ENCODE measurements at regions of chr15 and their contacts with region 1.

Region 1: DNA sequence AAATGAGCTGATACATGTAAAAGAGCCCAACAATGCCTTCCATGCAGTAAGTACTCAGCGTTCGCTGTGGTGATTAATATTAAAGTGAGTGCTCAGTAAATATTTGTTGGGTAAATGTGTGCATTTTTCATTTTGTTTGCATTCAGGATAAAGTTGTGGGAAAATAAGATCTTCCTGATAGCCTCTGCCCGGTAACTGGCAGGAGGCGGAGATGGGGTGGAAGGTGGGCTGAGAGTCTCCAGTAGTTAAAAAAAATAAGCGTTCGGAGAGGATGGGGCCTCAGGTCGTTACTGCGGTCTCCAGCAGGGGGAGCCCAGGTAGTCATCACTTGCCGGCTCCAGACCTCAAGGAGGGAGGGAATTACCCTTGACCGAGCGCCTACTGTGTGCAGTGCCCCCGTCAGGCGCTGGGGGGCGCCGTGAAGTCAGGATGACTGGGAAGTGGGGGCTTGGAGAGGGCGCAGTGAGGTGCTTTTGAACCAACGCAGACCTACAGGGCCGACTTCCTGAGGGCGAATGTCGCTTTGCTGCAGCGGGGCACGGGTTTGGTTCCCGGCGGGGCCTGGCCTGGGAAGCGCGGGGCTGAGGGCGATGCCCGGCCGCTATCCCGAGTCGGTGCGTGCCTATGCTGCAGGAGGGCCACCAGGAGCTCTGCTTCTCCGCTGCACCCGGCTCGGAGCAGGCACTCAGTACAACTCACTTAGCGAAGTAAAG is 80.1 kb downstream of the RHCG start:
- H3K4me3 ChIP-seq: no peak overlapping the region
- H3K27ac ChIP-seq: no peak overlapping the region
- H3K4me1 ChIP-seq: no peaks in the 10 kb centered on the region
- CTCF ChIP-seq: peak; percentile 92

Region 2: DNA sequence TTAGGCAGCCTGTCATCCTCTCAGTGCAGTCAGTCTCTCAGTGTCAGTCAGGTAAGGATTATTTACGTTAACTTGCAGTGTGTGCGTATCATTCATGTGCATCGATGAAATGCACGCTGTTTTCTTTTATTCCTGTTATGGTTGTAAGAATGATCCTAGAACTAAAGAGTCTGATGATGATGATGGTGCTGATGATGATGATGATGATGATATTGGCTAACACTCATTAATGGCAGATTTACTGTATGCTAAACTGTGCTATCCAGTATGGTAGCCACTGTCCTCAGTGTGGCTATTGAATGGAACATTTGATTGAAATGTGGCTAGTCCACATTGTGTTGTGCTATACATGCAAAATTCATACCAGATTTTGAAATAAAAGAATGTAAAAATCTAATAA is 133.1 kb before region 1 on chr15:
- CTCF ChIA-PET with region 1: no interaction called
- POLR2A ChIA-PET with region 1: no interaction called
- H3K4me3 ChIP-seq: no peak overlapping the region
- H3K27ac ChIP-seq: no peak overlapping the region
- H3K4me1 ChIP-seq: no peaks in the 10 kb centered on the region
- CTCF ChIP-seq: no peak

Region 3: GRCh38 chr15:89317186-89317720 is 99.0 kb before region 1 on chr15:
- CTCF ChIA-PET with region 1: no interaction called
- POLR2A ChIA-PET with region 1: no interaction called
- H3K4me3 ChIP-seq: no peak overlapping the region
- H3K27ac ChIP-seq: no peak overlapping the region
- H3K4me1 ChIP-seq: no peaks in the 10 kb centered on the region
- CTCF ChIP-seq: no peak

Region 4: DNA sequence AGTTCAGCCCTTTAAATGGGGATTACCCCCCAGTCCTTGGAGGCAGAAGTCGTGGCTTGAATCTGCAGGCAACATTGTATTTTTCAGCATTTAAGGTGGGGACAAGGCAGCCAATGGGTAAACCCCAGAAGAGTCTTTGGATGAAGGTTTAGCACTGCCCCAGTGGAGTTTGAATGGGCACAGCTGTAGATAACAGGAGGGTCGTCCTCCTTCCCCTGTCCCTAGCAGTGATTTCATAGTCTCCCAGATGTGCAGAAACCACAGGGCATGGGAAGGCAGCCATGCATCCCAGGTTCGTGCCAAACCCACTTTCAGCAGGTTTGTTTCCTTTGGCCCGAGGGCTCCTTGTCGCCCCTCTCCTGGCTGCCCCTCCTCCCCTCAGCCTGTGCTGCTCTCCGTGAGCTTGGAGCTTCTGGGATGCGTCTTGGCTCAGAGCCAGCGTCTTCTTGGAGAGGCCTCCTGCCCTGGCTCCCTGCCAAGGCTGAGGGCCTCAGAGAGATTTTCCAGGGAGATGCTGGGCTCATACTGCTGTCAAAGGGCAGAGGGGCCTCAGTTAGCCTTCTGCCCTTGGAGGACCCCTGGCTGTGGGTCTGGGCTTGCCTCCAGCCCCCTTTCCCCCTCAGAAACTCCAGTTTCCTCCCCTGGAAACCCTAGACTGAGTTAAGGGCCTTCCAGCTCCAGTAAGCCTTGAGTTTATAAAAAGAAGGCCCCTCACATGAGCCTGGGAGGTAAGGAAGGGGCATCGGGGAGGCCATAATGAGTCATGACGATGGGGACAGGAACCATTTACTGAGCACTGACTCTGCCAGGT is 32.7 kb before region 1 on chr15:
- CTCF ChIA-PET with region 1: interaction called, 13 read pairs
- POLR2A ChIA-PET with region 1: no interaction called
- H3K4me3 ChIP-seq: no peak overlapping the region
- H3K27ac ChIP-seq: peak overlapping the region; percentile 76
- H3K4me1 ChIP-seq: peaks cover 23% of the 10 kb centered on the region
- CTCF ChIP-seq: no peak

Region 5: DNA sequence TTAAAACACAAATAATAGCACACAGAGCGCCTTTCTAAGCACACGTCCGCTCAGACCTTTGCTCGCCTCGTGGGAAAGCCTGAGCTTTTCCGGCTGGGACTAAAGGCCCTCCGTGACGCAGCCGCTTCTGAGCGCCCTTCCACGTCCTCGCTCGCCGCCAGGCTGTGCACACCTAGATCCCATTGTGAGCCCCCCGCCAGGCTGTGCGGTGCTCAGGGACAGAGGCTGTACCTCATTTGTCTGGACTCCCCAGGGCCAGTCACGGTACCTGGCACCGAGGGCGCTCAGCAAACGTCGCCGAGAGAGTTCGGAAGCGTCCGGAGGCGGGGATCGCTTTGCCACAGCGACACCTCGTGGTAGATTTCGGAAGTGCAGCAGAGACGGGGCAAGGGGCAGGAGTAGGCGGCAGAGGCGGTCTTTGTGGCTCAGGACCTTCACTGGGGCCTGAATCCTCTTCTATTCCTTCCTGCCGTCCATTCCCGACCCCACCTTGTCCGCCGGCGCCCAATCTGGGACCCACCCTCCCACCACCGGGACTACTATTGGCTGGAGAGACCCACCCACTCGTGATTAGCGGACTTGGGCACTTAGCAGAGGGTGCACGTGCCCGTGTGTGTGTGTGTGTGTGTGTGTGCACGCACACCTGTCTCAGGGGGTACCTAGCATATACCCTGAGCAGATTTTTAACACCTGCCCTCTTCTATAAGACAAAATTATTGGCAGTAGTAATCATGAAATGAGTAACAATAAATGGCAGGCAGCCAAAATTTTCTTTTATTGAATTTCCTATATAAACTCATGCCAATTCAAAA is 14.4 kb after region 1 on chr15:
- CTCF ChIA-PET with region 1: interaction called, 96 read pairs
- POLR2A ChIA-PET with region 1: no interaction called
- H3K4me3 ChIP-seq: peak overlapping the region; percentile 18; the same call in 1 of the 2 replicates
- H3K27ac ChIP-seq: no peak overlapping the region
- H3K4me1 ChIP-seq: no peaks in the 10 kb centered on the region
- CTCF ChIP-seq: peak; percentile 95

Region 6: DNA sequence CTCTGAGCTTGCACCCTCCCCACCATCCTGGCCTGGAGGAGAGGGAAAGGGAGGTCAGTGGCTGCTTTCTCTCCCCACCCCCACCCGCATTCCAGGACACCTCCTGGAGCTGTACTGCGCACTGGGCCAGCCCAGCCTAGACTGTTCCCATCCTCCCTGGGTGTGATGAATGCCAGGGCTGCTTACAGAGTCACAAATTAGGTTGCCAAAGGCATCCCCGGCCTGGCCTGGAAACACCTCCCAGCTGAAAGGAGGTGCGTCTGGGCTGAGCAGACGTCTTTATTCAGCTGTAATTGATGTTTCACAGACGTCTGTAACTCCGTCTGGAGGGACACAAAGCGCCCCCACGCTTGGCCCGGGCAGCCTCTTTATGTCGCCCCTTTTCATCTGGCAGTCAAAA is 32.5 kb after region 1 on chr15:
- CTCF ChIA-PET with region 1: interaction called, 58 read pairs
- POLR2A ChIA-PET with region 1: no interaction called
- H3K4me3 ChIP-seq: no peak overlapping the region
- H3K27ac ChIP-seq: no peak overlapping the region
- H3K4me1 ChIP-seq: peaks cover 9% of the 10 kb centered on the region
- CTCF ChIP-seq: no peak

Region 7: DNA sequence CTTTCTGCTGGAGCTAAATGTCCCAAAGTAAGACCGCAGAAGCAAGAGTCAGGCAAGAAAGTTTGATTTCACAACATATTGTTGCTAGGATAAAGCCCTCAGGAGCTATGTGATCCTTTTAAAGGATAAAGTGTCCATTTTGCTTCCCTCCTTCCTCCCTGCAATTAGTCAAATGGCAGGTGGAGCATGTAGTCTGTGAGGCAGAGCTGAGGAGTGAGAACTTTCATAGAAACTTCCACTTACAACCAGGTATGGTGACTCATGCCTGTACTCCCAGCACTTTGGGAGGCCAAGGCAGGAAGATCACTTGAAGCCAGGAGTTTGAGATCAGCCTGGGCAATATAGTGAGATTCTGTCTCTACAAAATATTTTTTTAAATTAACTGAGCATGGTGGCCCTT is 105.3 kb after region 1 on chr15:
- CTCF ChIA-PET with region 1: no interaction called
- POLR2A ChIA-PET with region 1: no interaction called
- H3K4me3 ChIP-seq: no peak overlapping the region
- H3K27ac ChIP-seq: no peak overlapping the region
- H3K4me1 ChIP-seq: no peaks in the 10 kb centered on the region
- CTCF ChIP-seq: no peak

Region 8: DNA sequence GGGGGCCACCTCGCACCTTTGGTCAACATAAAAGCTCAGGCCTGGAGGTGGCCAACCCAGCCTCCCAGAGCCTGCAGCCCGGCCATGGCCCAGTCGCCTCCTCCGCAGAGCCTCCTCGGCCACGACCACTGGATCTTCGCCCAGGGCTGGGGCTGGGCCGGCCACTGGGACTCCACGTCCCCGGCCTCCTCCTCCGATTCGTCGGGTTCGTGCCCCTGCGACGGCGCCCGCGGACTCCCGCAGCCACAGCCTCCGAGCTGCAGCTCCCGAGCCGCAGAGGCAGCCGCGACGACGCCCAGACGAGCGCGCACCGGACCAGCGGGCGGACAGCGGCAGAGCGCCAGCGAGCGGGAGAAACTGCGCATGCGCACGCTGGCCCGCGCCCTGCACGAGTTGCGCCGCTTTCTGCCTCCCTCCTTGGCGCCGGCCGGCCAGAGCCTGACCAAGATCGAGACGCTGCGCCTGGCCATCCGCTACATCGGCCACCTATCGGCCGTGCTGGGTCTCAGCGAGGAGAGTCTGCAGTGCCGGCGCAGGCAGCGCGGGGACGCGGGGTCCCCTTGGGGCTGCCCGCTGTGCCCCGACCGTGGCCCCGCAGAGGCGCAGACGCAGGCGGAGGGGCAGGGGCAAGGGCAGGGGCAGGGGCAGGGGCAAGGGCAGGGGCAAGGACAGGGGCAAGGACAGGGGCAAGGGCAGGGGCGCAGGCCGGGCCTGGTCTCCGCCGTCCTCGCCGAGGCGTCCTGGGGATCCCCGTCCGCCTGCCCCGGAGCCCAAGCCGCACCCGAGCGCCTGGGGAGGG is 360.2 kb after region 1 on chr15 and contains the start of gene MESP2:
- CTCF ChIA-PET with region 1: no interaction called
- POLR2A ChIA-PET with region 1: no interaction called
- H3K4me3 ChIP-seq: peak within 1 kb of the TSS; percentile 27
- H3K27ac ChIP-seq: peak within 1 kb of the TSS; percentile 10; the same call in 1 of the 2 replicates
- H3K4me1 ChIP-seq: no peaks in the 10 kb centered on the region; the same call in 1 of the 2 replicates
- CTCF ChIP-seq: peak; percentile 26; the same call in 1 of the 2 replicates